ENCODE measurements at regions of chr10 and their contacts with region 1.

Region 1: DNA sequence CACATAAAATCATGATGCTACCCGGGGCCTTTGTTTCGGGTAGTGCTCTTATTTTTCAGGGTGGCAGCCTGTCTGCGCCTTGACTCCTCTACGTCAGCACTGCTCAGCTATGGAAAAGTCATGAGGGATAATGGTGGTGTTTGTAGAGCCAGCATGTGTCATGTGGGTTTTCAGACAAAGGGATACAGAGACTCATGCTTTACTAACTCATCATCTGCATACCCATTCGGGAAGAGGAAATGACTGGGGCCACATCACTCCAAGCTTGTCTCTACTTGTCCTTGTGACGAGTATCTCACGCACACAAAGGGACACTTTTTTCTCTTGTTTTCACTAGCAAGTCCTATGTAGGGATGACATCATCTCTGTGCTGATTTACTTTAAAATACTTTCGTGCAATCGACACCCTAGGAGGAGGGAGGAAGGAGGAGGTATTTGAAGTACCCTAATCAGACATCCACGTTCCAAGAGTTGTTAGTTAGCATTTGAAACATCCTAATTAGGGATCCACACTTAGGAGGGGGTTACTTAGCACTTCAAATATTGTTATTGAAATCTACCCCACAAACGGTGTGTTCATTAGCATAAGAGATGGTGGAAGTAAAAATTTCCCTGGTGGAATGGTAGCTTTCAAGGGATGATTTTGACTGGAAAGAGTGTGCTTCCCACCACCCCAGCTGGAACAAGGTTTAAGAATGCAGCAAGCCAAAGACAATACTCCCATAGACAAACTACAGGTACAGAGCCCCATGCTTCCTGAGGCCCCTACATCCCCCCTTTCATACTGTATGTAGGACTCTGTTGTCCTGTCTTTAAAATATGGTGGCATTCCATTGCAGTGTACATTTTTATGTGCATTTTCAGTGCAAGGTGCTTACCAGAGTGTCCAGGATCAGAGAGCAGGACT is 52.0 kb downstream of the THNSL1 start:
- DNase-seq: no peak
- ATAC-seq: peak; percentile 44
- H3K4me3 Mint-ChIP-seq: no peak overlapping the region
- H3K27ac Mint-ChIP-seq: no peak overlapping the region
- H3K4me1 Mint-ChIP-seq: peaks cover 6% of the 10 kb centered on the region
- H3K27me3 Mint-ChIP-seq: peaks cover 2% of the 10 kb centered on the region

Region 2: GRCh38 chr10:24958091-24958720 is 110.2 kb before region 1 on chr10:
- CTCF ChIA-PET with region 1: no interaction called
- POLR2A ChIA-PET with region 1: no interaction called
- intact Hi-C with region 1: no loop called
- DNase-seq: no peak
- ATAC-seq: no peak
- H3K4me3 Mint-ChIP-seq: no peak overlapping the region
- H3K27ac Mint-ChIP-seq: no peak overlapping the region
- H3K4me1 Mint-ChIP-seq: peaks cover 10% of the 10 kb centered on the region
- H3K27me3 Mint-ChIP-seq: no peaks in the 10 kb centered on the region

Region 3: DNA sequence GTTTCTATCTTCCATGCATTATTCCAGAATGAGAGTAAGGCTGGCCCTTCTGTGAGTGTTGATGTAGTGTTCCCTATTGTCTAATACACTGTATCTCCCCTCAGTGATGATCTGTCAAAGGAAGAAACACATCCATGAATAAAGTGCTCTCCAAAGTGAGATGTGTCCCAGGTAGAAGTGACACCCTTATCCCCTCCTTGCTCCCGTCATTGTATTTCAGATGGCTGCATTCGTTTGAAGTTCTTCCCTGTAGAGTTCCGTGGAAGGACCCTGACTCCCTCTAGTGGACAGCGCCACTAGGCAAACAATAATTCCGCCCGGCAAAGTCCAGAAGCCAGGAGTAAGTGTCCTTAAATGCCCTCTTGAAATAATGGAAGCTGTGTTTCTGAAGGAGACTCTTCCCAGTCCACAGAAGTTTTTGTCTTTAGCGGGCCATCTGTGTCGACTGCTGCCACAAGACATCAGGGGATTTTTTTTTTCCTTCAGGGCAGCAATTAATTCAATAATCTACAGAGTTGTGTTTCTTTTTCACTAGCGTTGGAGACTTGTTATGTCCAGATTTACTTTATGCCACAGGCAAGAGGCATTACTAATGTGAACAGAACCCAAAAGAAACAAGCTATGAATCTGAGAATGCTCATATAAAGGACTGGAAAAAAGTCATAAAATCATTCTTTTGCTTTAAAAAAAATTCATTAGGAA is 12.6 kb after region 1 on chr10:
- CTCF ChIA-PET with region 1: interaction called, 21 read pairs
- POLR2A ChIA-PET with region 1: no interaction called
- intact Hi-C with region 1: no loop called
- DNase-seq: peak; percentile 77
- ATAC-seq: peak; percentile 65
- H3K4me3 Mint-ChIP-seq: no peak overlapping the region
- H3K27ac Mint-ChIP-seq: no peak overlapping the region
- H3K4me1 Mint-ChIP-seq: peaks cover 6% of the 10 kb centered on the region
- H3K27me3 Mint-ChIP-seq: peaks cover 3% of the 10 kb centered on the region

Region 4: DNA sequence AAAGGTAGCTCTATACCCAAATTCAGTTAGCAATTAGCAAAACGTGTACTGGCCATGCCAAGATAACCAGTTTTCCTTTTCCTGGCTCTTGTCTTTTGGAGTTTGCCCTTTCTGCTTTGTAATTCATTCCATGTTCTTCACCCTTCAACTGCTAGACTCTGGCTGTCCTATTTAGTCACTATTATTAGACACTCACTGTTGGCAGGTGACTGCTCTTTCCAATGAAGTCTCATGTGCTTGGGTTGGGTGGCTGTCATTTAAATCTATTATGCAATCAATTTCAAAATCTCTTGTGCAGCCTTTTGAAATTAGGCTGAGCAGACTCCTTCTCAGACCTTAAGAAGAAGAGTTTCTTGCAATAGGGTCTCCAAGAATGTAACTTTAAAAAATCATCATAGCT is 372.9 kb after region 1 on chr10:
- CTCF ChIA-PET with region 1: no interaction called
- POLR2A ChIA-PET with region 1: no interaction called
- intact Hi-C with region 1: no loop called
- DNase-seq: no peak
- ATAC-seq: no peak
- H3K4me3 Mint-ChIP-seq: no peak overlapping the region
- H3K27ac Mint-ChIP-seq: no peak overlapping the region
- H3K4me1 Mint-ChIP-seq: no peaks in the 10 kb centered on the region
- H3K27me3 Mint-ChIP-seq: no peaks in the 10 kb centered on the region

Region 5: GRCh38 chr10:25786161-25786560 is 717.8 kb after region 1 on chr10:
- CTCF ChIA-PET with region 1: no interaction called
- POLR2A ChIA-PET with region 1: no interaction called
- intact Hi-C with region 1: no loop called
- DNase-seq: no peak
- ATAC-seq: no peak
- H3K4me3 Mint-ChIP-seq: no peak overlapping the region
- H3K27ac Mint-ChIP-seq: no peak overlapping the region
- H3K4me1 Mint-ChIP-seq: no peaks in the 10 kb centered on the region
- H3K27me3 Mint-ChIP-seq: peaks cover 14% of the 10 kb centered on the region

Region 6: GRCh38 chr10:26516540-26517101 is 1448.2 kb after region 1 on chr10:
- CTCF ChIA-PET with region 1: no interaction called
- POLR2A ChIA-PET with region 1: no interaction called
- intact Hi-C with region 1: no loop called
- DNase-seq: no peak
- ATAC-seq: no peak
- H3K4me3 Mint-ChIP-seq: no peak overlapping the region
- H3K27ac Mint-ChIP-seq: no peak overlapping the region
- H3K4me1 Mint-ChIP-seq: peaks cover 5% of the 10 kb centered on the region
- H3K27me3 Mint-ChIP-seq: no peaks in the 10 kb centered on the region

Measured in activated CD4-positive, alpha-beta T cell treated with anti-CD3 and anti-CD28 coated beads for 36 hours (primary cell).